ENCODE measurements at regions of chr14 and their contacts with region 1.

Region 1: DNA sequence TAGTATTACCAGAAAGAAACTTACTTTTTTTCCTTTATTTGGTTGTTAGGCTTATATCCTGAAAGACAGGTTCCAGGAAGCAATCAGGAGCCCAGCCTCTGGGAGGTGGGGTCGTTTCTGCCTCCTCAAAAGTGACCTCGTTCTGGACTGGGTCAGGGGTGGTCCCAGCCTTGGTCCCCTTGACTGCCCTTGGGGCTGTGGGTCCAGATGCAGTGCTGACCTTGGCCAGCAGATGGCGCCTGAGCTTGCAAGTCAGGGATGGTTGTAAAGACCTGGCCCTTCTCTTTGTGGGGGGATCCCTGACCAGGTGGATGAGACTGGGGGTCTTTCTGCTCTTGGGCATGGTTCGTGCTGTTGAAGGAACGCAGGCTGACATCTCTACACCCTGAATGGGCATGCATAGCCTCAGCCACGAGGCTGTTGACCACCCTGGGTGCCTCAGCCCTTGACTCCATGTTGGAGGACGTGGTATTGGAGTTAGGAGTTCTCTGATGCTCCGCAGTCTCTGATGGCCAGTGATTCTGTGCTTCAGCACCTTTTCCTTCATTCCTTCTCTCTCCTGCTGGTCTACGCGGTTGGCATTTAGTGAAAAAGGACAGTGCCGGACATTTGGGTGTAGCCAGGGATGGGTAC is 62.4 kb downstream of the ADCK1 start:
- DNase-seq: peak; percentile 49
- ATAC-seq: peak; percentile 87
- H3K4me3 ChIP-seq: no peak overlapping the region
- H3K27ac ChIP-seq: no peak overlapping the region
- H3K4me1 ChIP-seq: no peaks in the 10 kb centered on the region
- H3K27me3 ChIP-seq: no peaks in the 10 kb centered on the region
- CTCF ChIP-seq: peak; percentile 80
- POLR2A ChIP-seq: no peak
- RAD21 ChIP-seq: peak; percentile 75

Region 2: DNA sequence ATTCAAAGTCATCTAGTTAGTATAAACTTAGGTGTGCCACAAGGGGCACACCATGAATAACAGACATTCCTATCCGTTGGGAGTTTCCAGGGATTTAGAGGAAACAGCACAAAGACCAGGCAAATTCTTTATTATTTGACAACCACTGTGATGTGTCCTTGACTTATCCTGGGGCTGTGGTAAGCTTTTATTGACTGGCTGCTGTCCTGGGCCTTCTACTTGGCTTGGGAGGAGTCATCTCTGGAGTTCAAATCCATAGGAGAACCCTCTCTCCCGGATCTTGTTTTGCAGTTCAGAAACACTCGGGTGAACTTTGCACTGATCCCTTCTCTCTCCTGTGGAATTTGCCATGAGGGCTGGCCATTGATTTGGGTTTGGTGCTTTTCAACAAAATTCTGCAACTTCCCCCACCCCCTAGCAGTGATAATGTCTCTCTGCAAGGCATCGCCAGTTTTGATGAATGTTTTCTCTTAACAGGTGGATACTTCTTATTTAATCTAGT is 73.9 kb after region 1 on chr14:
- CTCF ChIA-PET with region 1: no interaction called
- POLR2A ChIA-PET with region 1: no interaction called
- dilution Hi-C with region 1: no loop called
- in situ Hi-C with region 1: no loop called
- intact Hi-C with region 1: no loop called
- DNase-seq: no peak
- ATAC-seq: no peak
- H3K4me3 ChIP-seq: no peak overlapping the region
- H3K27ac ChIP-seq: no peak overlapping the region
- H3K4me1 ChIP-seq: no peaks in the 10 kb centered on the region
- H3K27me3 ChIP-seq: no peaks in the 10 kb centered on the region
- CTCF ChIP-seq: no peak
- POLR2A ChIP-seq: no peak
- RAD21 ChIP-seq: no peak

Region 3: DNA sequence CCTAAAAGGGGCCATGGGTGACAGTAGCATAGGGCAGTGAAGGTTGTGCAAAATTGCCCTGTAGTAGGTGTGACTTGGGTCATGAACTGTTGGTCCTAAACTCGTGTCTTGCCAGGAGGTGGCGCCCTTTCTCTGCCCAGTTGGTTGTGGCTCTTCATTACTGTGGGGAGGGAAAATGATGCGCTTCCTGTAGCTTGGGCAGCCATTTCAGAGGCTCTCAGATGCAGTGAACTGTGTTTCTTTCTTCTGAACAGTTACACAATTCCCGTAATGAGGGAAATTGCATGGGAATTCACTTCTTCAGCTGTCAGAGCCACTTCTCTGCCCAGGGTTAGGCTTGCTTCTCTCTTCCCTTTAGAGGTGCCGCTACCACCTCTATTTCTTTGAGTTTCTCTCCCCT is 159.8 kb after region 1 on chr14:
- CTCF ChIA-PET with region 1: no interaction called
- POLR2A ChIA-PET with region 1: no interaction called
- dilution Hi-C with region 1: no loop called
- in situ Hi-C with region 1: no loop called
- intact Hi-C with region 1: loop called (anchors 10 kb)
- DNase-seq: peak; percentile 16
- ATAC-seq: no peak; the same call in 1 of the 2 replicates
- H3K4me3 ChIP-seq: no peak overlapping the region
- H3K27ac ChIP-seq: no peak overlapping the region
- H3K4me1 ChIP-seq: no peaks in the 10 kb centered on the region
- H3K27me3 ChIP-seq: no peaks in the 10 kb centered on the region
- CTCF ChIP-seq: peak; percentile 48
- POLR2A ChIP-seq: no peak
- RAD21 ChIP-seq: peak; percentile 50

Region 4: DNA sequence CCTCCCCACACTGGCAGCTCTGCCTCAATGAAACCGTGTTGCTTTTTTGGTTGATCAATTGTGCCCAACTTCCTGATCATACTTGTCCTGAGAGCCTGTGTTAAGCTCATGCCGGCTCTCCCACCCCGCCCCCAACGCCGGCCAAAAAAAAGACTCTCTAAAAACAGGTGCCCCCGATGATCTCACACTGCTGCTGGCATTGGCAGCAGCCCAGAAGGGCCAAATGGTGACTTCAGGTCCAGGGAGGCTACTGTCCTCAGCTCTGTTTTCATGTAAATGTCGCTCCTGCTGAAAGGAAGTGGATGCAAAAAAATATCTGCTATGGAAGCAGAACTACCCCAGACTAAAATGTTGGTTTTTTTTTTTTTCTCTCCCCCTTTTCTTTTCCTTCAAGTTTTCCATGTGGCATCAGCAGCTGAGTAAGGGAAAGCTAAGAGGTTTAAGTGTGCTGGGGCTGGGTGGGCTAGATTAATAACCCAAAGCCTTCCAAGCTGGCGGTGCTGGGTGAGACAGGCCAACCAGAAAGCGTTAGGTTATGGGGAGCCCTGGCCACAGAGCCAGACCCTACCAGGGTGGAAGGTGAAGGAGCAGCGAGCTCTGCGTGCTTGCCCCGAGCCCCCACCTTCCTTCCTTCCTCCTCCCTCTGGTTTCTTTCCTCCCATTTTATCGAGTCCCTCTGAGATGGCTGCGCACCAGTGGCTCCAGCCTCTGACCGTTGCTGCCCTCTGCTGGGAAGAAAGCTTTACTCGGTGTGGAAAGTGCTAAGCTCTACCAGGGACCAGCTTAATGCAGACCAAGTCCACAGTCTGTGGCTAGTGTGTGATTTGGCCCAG is 704.0 kb after region 1 on chr14:
- CTCF ChIA-PET with region 1: interaction called, 10 read pairs
- POLR2A ChIA-PET with region 1: no interaction called
- dilution Hi-C with region 1: no loop called
- in situ Hi-C with region 1: no loop called
- intact Hi-C with region 1: loop called (anchors 1 kb)
- DNase-seq: peak; percentile 46
- ATAC-seq: peak; percentile 99
- H3K4me3 ChIP-seq: no peak overlapping the region
- H3K27ac ChIP-seq: no peak overlapping the region
- H3K4me1 ChIP-seq: no peaks in the 10 kb centered on the region
- H3K27me3 ChIP-seq: no peaks in the 10 kb centered on the region
- CTCF ChIP-seq: peak; percentile 67
- POLR2A ChIP-seq: no peak
- RAD21 ChIP-seq: peak; percentile 68

Region 5: GRCh38 chr14:78598041-78598920 is 736.0 kb after region 1 on chr14:
- CTCF ChIA-PET with region 1: interaction called, 4 read pairs
- POLR2A ChIA-PET with region 1: no interaction called
- dilution Hi-C with region 1: no loop called
- in situ Hi-C with region 1: loop called (anchors 25 kb)
- intact Hi-C with region 1: no loop called
- DNase-seq: peak; percentile 26
- ATAC-seq: peak; percentile 94
- H3K4me3 ChIP-seq: no peak overlapping the region
- H3K27ac ChIP-seq: no peak overlapping the region
- H3K4me1 ChIP-seq: no peaks in the 10 kb centered on the region
- H3K27me3 ChIP-seq: no peaks in the 10 kb centered on the region
- CTCF ChIP-seq: peak; percentile 87
- POLR2A ChIP-seq: no peak
- RAD21 ChIP-seq: peak; percentile 73

Region 6: GRCh38 chr14:78697341-78697740 is 835.1 kb after region 1 on chr14:
- CTCF ChIA-PET with region 1: no interaction called
- POLR2A ChIA-PET with region 1: no interaction called
- dilution Hi-C with region 1: no loop called
- in situ Hi-C with region 1: no loop called
- intact Hi-C with region 1: loop called (anchors 10 kb)
- DNase-seq: peak; percentile 26
- ATAC-seq: no peak
- H3K4me3 ChIP-seq: no peak overlapping the region
- H3K27ac ChIP-seq: no peak overlapping the region
- H3K4me1 ChIP-seq: no peaks in the 10 kb centered on the region
- H3K27me3 ChIP-seq: no peaks in the 10 kb centered on the region
- CTCF ChIP-seq: peak; percentile 56
- POLR2A ChIP-seq: no peak
- RAD21 ChIP-seq: peak; percentile 63

Region 7: DNA sequence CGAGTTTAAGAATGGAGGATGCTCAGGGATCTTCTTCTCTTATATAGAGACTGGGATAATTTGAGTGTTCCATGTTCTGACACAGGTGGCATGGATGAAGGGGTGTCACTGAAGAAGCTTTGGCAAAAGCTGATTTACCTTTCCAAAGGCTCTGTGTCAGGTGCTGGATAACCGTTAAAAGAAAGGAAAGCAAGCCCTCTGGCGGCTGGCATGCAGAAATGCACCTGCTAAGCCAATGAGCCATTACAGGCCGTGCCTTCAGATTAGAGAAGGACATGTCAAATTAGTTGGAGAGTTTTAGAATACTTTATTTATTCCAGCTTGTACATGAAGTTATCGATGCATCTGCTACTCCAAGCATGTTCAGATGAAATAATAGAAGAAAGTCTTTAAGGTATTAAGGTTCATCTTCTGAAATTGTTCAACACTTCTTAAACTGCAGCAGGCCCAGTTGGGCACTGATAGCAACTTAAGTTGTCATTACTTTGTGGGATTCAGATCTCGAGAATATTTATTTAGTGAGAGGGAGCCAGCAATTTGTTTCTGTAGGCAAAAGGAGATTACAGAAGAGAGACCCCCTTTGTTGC is 986.1 kb after region 1 on chr14:
- CTCF ChIA-PET with region 1: no interaction called
- POLR2A ChIA-PET with region 1: no interaction called
- dilution Hi-C with region 1: no loop called
- in situ Hi-C with region 1: loop called (anchors 25 kb)
- intact Hi-C with region 1: loop called (anchors 5 kb)
- DNase-seq: peak; percentile 31
- ATAC-seq: peak; percentile 87
- H3K4me3 ChIP-seq: no peak overlapping the region
- H3K27ac ChIP-seq: no peak overlapping the region
- H3K4me1 ChIP-seq: no peaks in the 10 kb centered on the region
- H3K27me3 ChIP-seq: no peaks in the 10 kb centered on the region
- CTCF ChIP-seq: peak; percentile 72
- POLR2A ChIP-seq: no peak
- RAD21 ChIP-seq: peak; percentile 15; the same call in 1 of the 2 replicates

Region 8: GRCh38 chr14:78902010-78902623 is 1039.8 kb after region 1 on chr14:
- CTCF ChIA-PET with region 1: no interaction called
- POLR2A ChIA-PET with region 1: no interaction called
- dilution Hi-C with region 1: no loop called
- in situ Hi-C with region 1: no loop called
- intact Hi-C with region 1: loop called (anchors 10 kb)
- DNase-seq: peak; percentile 54
- ATAC-seq: peak; percentile 76
- H3K4me3 ChIP-seq: no peak overlapping the region
- H3K27ac ChIP-seq: no peak overlapping the region
- H3K4me1 ChIP-seq: no peaks in the 10 kb centered on the region
- H3K27me3 ChIP-seq: peaks cover 1% of the 10 kb centered on the region; the same call in 1 of the 2 replicates
- CTCF ChIP-seq: peak; percentile 65
- POLR2A ChIP-seq: no peak
- RAD21 ChIP-seq: no peak; the same call in 1 of the 2 replicates

Measured in IMR-90 (cell line).